ENCODE measurements at regions of chr14 and their contacts with region 1.

Region 1: GRCh38 chr14:32710731-32711680 is 227.7 kb upstream of the NPAS3 start:
- DNase-seq: no peak
- H3K4me3 ChIP-seq: peak overlapping the region in 3 of 8 donors; percentile 15 to 47 (median 16)
- H3K27ac ChIP-seq: peak overlapping the region in 2 of 8 donors; percentile 29 to 50
- H3K4me1 ChIP-seq: peaks cover 0 to 8% (median 0%) of the 10 kb centered on the region in 6 donors
- H3K27me3 ChIP-seq: no peaks in the 10 kb centered on the region
- CTCF ChIP-seq: peak in 9 of 11 experiments; percentile 15 to 56 (median 38)
- POLR2A ChIP-seq: no peak

Region 2: GRCh38 chr14:32457213-32457920 is 253.6 kb before region 1 on chr14:
- intact Hi-C with region 1: no loop called
- DNase-seq: no peak
- H3K4me3 ChIP-seq: no peak overlapping the region
- H3K27ac ChIP-seq: no peak overlapping the region
- H3K4me1 ChIP-seq: no peaks in the 10 kb centered on the region
- H3K27me3 ChIP-seq: no peaks in the 10 kb centered on the region
- CTCF ChIP-seq: no peak
- POLR2A ChIP-seq: no peak

Region 3: GRCh38 chr14:33799705-33800570 is 1088.9 kb after region 1 on chr14:
- intact Hi-C with region 1: loop called (anchors 5 kb)
- DNase-seq: no peak
- H3K4me3 ChIP-seq: peak overlapping the region in 2 of 8 donors; percentile 11 to 24
- H3K27ac ChIP-seq: no peak overlapping the region
- H3K4me1 ChIP-seq: no peaks in the 10 kb centered on the region
- H3K27me3 ChIP-seq: peaks cover 0 to 38% (median 17%) of the 10 kb centered on the region in 7 donors
- CTCF ChIP-seq: no peak
- POLR2A ChIP-seq: no peak

Measured in spleen (tissue), 13 donors.